PC-9 (cell line): ENCODE measurements at regions of chr6 and their contacts with region 1.

Region 1: DNA sequence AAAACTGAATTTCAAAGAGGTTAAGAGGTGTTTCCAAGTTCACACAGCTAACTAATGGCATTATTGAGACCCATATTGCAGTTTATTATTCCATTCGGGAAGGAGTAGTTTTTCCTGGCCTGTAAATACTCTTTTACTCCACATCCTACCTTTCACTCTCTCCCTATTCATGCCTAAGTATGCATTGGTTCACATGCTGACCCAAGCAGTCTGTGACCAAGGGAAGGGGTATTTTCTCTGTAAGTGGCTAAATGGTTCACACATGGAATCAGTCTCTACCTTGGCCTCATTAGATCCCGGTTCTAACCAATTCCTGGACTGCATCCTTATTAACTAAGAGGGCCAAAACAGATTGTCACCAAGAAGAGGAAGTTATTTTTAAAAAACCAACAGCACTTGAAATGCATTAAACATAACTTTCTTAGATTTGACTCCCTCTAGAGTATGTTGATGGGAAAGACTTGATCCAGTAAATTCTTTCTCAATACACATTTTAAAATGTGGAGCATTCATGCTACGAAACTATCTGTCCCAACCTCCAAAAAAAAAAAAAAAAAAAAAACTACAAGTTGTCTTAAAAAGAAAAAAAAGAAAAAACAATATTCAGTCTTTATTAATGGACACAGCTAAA is 17.8 kb upstream of the RSPO3 start:
- DNase-seq: no peak
- H3K4me3 ChIP-seq: no peak overlapping the region
- H3K27ac ChIP-seq: peak overlapping the region; percentile 85; the same call in 1 of the 2 replicates
- H3K4me1 ChIP-seq: peaks cover 17% of the 10 kb centered on the region
- H3K27me3 ChIP-seq: no peaks in the 10 kb centered on the region
- CTCF ChIP-seq: peak; percentile 55

Region 2: GRCh38 chr6:126614642-126615452 is 485.8 kb before region 1 on chr6:
- CTCF ChIA-PET with region 1: no interaction called
- POLR2A ChIA-PET with region 1: no interaction called
- intact Hi-C with region 1: no loop called
- DNase-seq: no peak
- H3K4me3 ChIP-seq: no peak overlapping the region
- H3K27ac ChIP-seq: no peak overlapping the region
- H3K4me1 ChIP-seq: no peaks in the 10 kb centered on the region
- H3K27me3 ChIP-seq: no peaks in the 10 kb centered on the region
- CTCF ChIP-seq: no peak

Region 3: DNA sequence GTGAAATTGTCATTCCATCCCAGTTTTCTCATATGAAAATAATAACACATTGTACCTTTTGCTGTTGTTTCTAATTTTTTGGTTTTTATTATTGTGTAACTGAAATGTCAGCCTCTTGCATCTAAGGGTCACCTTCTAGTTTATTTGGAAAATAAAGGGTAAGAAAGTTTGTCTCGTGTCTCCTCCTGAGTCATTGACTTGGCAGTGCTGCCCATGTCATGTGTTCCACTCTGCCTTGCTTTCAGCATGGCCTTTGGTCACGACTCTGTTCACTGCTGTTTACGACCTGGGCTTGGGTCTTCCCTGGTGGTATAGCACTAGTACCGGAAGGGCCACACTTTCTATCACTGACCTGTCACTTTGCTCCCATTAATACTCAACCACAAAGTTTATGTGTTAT is 153.6 kb before region 1 on chr6:
- CTCF ChIA-PET with region 1: no interaction called
- POLR2A ChIA-PET with region 1: interaction called, 10 read pairs
- intact Hi-C with region 1: no loop called
- DNase-seq: no peak
- H3K4me3 ChIP-seq: no peak overlapping the region
- H3K27ac ChIP-seq: no peak overlapping the region
- H3K4me1 ChIP-seq: no peaks in the 10 kb centered on the region
- H3K27me3 ChIP-seq: no peaks in the 10 kb centered on the region
- CTCF ChIP-seq: no peak

Region 4: GRCh38 chr6:126967296-126968005 is 133.2 kb before region 1 on chr6:
- CTCF ChIA-PET with region 1: no interaction called
- POLR2A ChIA-PET with region 1: interaction called, 10 read pairs
- intact Hi-C with region 1: no loop called
- DNase-seq: no peak
- H3K4me3 ChIP-seq: no peak overlapping the region
- H3K27ac ChIP-seq: no peak overlapping the region
- H3K4me1 ChIP-seq: no peaks in the 10 kb centered on the region
- H3K27me3 ChIP-seq: no peaks in the 10 kb centered on the region
- CTCF ChIP-seq: no peak